HepG2 (cell line): ENCODE measurements at regions of chr1 and their contacts with region 1.

Region 1: DNA sequence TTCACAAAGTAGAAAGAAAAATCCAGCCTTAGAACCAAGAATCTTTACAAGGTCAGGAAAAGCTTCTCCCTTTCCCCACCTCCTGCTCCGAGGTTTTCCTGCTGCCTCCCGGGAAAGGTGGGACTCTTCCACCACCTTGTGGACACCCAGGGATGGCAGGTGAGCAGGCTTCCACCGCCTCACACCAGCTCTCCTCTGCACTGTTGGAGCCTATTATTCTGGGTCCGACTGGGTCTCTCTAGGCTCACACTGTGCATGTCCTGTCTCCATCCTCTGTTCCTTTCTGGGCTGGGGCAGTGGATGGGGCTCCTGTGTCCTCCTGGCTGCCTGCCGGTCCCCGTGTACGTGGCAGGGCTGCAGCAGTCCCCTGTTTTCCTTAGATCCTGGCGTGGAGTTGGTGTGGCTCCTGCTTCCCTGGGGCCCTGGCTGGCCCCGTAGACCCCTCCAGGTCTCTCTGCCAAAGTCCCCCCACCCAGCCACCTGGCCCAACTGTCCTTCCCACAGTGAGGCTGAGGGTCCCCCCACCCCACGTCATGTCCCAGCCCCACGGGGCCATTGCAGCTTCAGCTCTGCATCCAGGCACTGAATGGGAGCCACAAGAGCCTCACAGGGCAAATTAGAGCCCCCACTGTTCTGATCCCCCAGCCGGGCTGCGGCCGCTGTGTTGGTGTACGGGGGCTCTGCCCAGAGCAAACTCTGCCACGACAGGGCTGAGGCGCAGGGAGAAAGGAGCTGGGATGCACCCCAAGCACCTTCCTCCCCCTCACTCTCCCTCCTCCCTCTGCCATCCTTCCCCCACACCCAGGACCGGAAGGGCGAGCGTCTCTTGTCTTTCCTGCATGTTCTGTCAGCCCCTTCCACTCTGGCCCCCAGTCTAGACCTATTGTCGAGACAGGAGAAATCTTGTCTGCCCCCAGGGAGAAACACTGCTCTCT is 3.3 kb upstream of the SLC45A1 start:
- DNase-seq: peak; percentile 73
- ATAC-seq: peak; percentile 83
- H3K4me3 ChIP-seq: peak overlapping the region; percentile 24 to 64 (median 37); a peak in 5 of 6 replicates
- H3K27ac ChIP-seq: no peak overlapping the region
- H3K4me1 ChIP-seq: peaks cover 66% of the 10 kb centered on the region
- H3K27me3 ChIP-seq: peaks cover 2 to 6% of the 10 kb centered on the region in 2 experiments; a peak in 1 of 5 replicates
- CTCF ChIP-seq: peak; percentile 99
- EP300 ChIP-seq: 0 out of 4 replicates have a peak, but pooled peaks of 1 of the 2 experiments have one; percentile 28
- POLR2A ChIP-seq: no peak
- RAD21 ChIP-seq: peak; percentile 96

Region 2: DNA sequence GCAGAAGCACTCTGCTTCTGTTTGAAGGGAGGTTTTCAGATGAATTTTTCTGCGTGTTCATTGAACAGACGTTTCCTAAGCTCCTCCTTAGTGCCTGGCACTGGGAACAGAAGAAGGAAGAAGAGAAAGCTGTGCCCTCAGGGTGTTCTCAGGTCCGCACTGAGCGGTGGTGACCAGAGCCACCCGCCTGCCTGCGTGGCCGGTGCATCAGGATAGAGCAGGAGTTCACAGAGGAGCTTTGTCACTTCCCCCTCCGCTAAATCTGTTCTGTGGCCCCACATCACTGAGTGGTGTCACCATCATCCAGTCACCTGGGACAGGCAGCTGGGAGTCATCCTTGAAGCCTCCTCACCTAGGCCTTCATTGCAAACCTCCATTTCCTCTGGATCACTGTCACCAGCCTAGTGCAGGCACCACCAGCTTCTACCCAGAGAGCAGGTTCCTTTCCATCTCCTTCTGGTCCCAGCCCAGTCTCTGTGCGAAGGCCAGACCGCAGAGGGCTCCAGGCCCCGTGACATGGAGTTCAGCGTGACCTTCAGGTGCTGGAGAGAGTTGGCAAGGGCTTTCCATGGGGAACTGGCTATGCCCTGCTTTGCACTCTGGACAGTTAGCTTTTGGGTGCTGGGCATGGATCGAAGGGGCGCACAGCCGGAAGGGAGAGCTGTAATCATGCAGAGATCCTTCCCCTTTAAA is 331.4 kb before region 1 on chr1:
- CTCF ChIA-PET with region 1: interaction called, 40 read pairs
- POLR2A ChIA-PET with region 1: interaction called, 7 read pairs
- in situ Hi-C with region 1: loop called (anchors 5 kb)
- intact Hi-C with region 1: loop called (anchors 1 kb)
- DNase-seq: no peak
- ATAC-seq: no peak
- H3K4me3 ChIP-seq: no peak overlapping the region
- H3K27ac ChIP-seq: no peak overlapping the region
- H3K4me1 ChIP-seq: 0 out of 2 replicates have a peak, but pooled peaks cover 5% of the 10 kb centered on the region
- H3K27me3 ChIP-seq: no peaks in the 10 kb centered on the region; a peak in 1 of 5 replicates
- CTCF ChIP-seq: no peak
- EP300 ChIP-seq: no peak
- POLR2A ChIP-seq: no peak
- RAD21 ChIP-seq: no peak

Region 3: DNA sequence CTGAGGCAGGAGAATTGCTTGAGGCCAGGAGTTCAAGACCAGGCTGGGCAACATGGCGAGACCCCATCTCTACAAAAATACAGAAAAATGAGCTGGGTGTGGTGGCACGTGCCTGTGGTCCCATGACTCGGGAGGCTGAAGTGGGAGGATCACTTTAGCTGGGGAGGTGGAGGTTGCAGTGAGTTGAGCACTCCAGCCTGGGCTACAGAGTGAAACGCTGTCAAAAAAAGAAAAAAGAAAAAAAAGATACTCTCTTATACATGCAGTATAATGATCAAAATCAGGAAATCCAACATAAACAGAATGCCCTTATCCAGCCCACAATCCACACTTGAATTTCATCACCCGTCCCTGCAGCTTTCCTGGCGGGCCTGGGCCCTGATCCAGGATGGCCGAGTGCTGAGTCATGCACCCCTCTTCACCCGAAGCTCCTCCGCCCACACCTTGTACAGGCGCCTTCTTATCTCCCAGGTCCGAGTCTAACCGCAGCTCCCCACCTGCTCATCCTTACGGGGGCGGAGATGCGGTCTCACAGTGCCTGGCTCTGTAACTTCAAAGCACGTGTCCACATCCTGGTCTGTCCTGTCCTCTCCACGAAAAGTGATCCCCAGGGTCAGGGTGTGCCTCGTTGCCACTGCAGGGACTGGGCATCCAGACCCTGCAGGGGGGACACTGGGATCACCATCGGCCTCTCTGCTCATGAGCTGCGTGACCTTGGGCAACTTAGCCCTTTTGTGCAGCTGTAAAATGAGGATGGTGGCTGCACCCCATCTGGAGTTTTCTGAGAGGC is 116.9 kb before region 1 on chr1:
- CTCF ChIA-PET with region 1: no interaction called
- POLR2A ChIA-PET with region 1: no interaction called
- in situ Hi-C with region 1: no loop called
- intact Hi-C with region 1: loop called (anchors 10 kb)
- DNase-seq: peak; percentile 83
- ATAC-seq: peak; percentile 35
- H3K4me3 ChIP-seq: no peak overlapping the region
- H3K27ac ChIP-seq: peak overlapping the region; percentile 61
- H3K4me1 ChIP-seq: peaks cover 91% of the 10 kb centered on the region
- H3K27me3 ChIP-seq: no peaks in the 10 kb centered on the region
- CTCF ChIP-seq: 0 out of 2 replicates have a peak, but pooled peaks have one; percentile 3
- EP300 ChIP-seq: peak; percentile 71 to 95; a peak in 3 of 4 replicates
- POLR2A ChIP-seq: no peak
- RAD21 ChIP-seq: no peak

Region 4: GRCh38 chr1:8259498-8260290 is 54.9 kb before region 1 on chr1:
- CTCF ChIA-PET with region 1: no interaction called
- POLR2A ChIA-PET with region 1: interaction called, 5 read pairs
- in situ Hi-C with region 1: no loop called
- intact Hi-C with region 1: loop called (anchors 5 kb)
- DNase-seq: peak; percentile 89
- ATAC-seq: peak; percentile 69
- H3K4me3 ChIP-seq: peak overlapping the region; percentile 31 to 53 (median 32)
- H3K27ac ChIP-seq: peak overlapping the region; percentile 91
- H3K4me1 ChIP-seq: peaks cover 74% of the 10 kb centered on the region
- H3K27me3 ChIP-seq: no peaks in the 10 kb centered on the region
- CTCF ChIP-seq: no peak
- EP300 ChIP-seq: peak; percentile 24 to 89; a peak in 3 of 4 replicates
- POLR2A ChIP-seq: no peak
- RAD21 ChIP-seq: no peak

Region 5: DNA sequence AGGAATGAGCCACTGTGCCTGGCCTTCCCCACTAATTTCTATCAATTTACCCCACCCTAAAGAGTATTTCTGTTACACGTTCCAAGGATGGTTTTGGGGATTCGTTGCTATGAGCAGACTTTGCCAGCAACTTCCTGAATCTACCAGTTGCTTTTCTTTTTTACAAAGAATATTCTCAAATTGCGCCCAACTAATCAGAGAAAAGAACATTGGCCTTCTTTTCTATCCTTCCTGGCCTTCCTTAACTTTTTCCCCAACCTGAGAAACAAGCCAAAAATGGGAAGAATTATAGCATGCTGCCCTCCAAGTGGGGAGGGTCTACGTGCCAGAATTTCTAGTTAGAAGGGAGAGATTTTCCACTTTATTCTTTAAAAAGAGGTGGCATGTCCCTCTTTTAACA is 41.6 kb before region 1 on chr1:
- CTCF ChIA-PET with region 1: no interaction called
- POLR2A ChIA-PET with region 1: no interaction called
- in situ Hi-C with region 1: no loop called
- intact Hi-C with region 1: no loop called
- DNase-seq: no peak
- ATAC-seq: no peak
- H3K4me3 ChIP-seq: no peak overlapping the region
- H3K27ac ChIP-seq: no peak overlapping the region
- H3K4me1 ChIP-seq: peaks cover 36% of the 10 kb centered on the region
- H3K27me3 ChIP-seq: no peaks in the 10 kb centered on the region
- CTCF ChIP-seq: no peak
- EP300 ChIP-seq: no peak
- POLR2A ChIP-seq: no peak
- RAD21 ChIP-seq: no peak

Region 6: DNA sequence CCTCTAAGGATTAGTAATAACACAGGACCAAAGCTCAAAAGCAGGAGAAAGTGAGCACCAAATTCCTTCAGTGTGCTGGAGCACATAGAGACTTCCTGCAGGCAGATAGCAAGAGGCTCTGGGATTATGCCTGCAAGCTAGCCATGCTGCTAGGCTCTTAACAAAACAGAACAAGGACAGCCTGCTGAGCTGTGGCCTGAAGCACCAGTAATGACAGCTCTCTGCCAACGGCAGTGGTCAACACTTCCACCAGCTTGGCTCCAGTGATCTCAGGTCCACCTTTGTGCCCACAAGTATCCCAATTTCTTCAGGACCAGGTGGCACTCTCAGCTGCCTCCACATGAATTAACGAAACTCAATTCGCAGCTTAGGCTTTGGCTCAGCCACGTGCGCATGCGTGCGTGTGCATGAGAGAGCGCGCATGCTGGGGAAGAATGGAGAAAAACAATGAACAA is 67.5 kb after region 1 on chr1:
- CTCF ChIA-PET with region 1: no interaction called
- POLR2A ChIA-PET with region 1: no interaction called
- in situ Hi-C with region 1: no loop called
- intact Hi-C with region 1: no loop called
- DNase-seq: no peak
- ATAC-seq: no peak
- H3K4me3 ChIP-seq: no peak overlapping the region
- H3K27ac ChIP-seq: no peak overlapping the region
- H3K4me1 ChIP-seq: peaks cover 18% of the 10 kb centered on the region
- H3K27me3 ChIP-seq: no peaks in the 10 kb centered on the region
- CTCF ChIP-seq: no peak
- EP300 ChIP-seq: no peak
- POLR2A ChIP-seq: no peak
- RAD21 ChIP-seq: no peak